Transverse colon (tissue), 4 donors: ENCODE measurements at regions of chr3 and their contacts with region 1.

Region 1: DNA sequence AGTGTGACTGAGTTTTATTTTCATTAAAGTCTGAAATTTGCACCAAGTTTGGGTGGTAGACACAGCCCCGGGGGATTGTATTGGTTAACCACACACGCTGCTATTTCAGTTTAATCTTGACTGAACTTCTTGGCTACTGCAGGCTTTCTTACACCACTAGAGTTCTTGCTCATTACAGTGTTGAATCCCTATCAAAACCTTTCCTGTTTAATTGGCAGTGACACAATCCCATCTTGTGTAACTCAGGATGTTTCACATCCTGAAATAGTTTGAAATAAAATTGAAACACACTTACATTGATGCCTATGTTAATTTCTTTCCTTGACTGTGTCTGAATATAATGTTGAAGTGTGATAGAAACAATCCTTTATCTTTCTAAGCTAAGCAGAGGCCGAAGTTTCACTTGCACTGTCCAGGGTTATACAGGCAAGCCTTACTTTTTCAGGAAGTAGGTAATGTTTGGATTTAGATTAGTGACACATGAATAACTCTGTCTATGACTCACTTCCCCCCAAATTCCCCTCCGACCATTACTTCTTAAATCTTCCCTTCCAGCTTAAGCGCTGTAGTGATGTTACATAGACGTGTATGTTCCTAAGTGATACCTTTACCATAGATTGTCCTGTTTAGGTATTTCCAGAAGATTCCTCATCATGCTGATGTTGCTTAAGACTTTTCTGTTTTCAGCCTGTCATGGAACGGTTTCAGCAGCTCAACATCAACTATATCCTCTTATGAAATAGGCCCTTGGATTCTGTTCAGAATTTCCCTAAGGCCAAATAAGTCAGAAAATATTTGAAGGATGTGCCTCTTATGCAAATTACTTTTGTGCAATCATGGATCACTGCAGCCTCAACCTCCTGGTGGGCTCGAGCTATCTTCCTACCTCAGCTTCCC is 16.8 kb downstream of the ATG7 start:
- DNase-seq: no peak
- H3K4me3 ChIP-seq: no peak overlapping the region
- H3K27ac ChIP-seq: peak overlapping the region; percentile 71 to 80 (median 76)
- H3K4me1 ChIP-seq: peaks cover 12 to 43% (median 18%) of the 10 kb centered on the region in 4 donors
- H3K27me3 ChIP-seq: no peaks in the 10 kb centered on the region
- CTCF ChIP-seq: no peak
- EP300 ChIP-seq: no peak
- POLR2A ChIP-seq: no peak

Region 2: GRCh38 chr3:10263646-10264363 is 1025.2 kb before region 1 on chr3:
- in situ Hi-C with region 1: no loop called
- intact Hi-C with region 1: no loop called
- DNase-seq: peak; percentile 24
- H3K4me3 ChIP-seq: no peak overlapping the region
- H3K27ac ChIP-seq: peak overlapping the region in 3 of 4 donors; percentile 4 to 39 (median 19)
- H3K4me1 ChIP-seq: peaks cover 0 to 20% (median 6%) of the 10 kb centered on the region in 4 donors
- H3K27me3 ChIP-seq: no peaks in the 10 kb centered on the region
- CTCF ChIP-seq: peak; percentile 32 to 53 (median 45)
- EP300 ChIP-seq: no peak
- POLR2A ChIP-seq: no peak

Region 3: GRCh38 chr3:11155341-11156025 is 133.6 kb before region 1 on chr3:
- in situ Hi-C with region 1: no loop called
- intact Hi-C with region 1: loop called (anchors 2 kb)
- DNase-seq: peak; percentile 74
- H3K4me3 ChIP-seq: peak overlapping the region; percentile 38 to 62 (median 44)
- H3K27ac ChIP-seq: peak overlapping the region; percentile 38 to 62 (median 46)
- H3K4me1 ChIP-seq: peaks cover 0 to 36% (median 9%) of the 10 kb centered on the region in 4 donors
- H3K27me3 ChIP-seq: peaks cover 21% of the 10 kb centered on the region
- CTCF ChIP-seq: peak; percentile 59 to 70 (median 66)
- EP300 ChIP-seq: no peak
- POLR2A ChIP-seq: no peak